ENCODE measurements at regions of chr7 and their contacts with region 1.

Region 1: GRCh38 chr7:30284298-30285066 is at the start of gene ZNRF2:
- DNase-seq: peak; percentile 99
- H3K4me3 Mint-ChIP-seq: peak within 1 kb of the TSS; percentile 79
- H3K27ac Mint-ChIP-seq: peak within 1 kb of the TSS; percentile 84
- H3K4me1 Mint-ChIP-seq: peaks cover 39% of the 10 kb centered on the region
- H3K27me3 Mint-ChIP-seq: no peaks in the 10 kb centered on the region
- total RNA-seq, gene ZNRF2: 10.4 to 10.5 TPM

Region 2: DNA sequence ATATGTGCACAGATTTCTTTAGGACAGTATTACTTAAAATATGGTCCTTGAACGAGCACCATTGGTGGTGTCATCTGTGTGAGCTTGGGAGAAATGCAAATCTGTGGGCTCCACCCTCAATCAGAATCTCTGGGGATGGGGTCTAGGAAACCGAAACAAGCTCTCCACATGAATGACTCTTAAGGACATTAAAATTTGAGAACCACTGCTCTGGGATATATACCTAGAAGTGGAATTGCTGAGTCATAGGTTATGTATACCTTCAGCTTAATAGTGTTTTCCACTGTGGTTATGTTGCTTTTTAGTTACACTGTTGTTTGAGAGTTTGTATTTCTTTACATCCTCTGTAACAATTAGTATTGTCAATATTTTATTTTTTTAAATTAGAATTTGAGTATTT is 23.9 kb after region 1 on chr7:
- CTCF ChIA-PET with region 1: no interaction called
- intact Hi-C with region 1: loop called (anchors 1 kb)
- DNase-seq: no peak
- H3K4me3 Mint-ChIP-seq: no peak overlapping the region
- H3K27ac Mint-ChIP-seq: no peak overlapping the region
- H3K4me1 Mint-ChIP-seq: peaks cover 54% of the 10 kb centered on the region
- H3K27me3 Mint-ChIP-seq: no peaks in the 10 kb centered on the region

Region 3: GRCh38 chr7:30330134-30331111 is 45.9 kb after region 1 on chr7:
- CTCF ChIA-PET with region 1: no interaction called
- intact Hi-C with region 1: loop called (anchors 1 kb)
- DNase-seq: peak; percentile 52
- H3K4me3 Mint-ChIP-seq: peak overlapping the region; percentile 54
- H3K27ac Mint-ChIP-seq: peak overlapping the region; percentile 48
- H3K4me1 Mint-ChIP-seq: peaks cover 44% of the 10 kb centered on the region
- H3K27me3 Mint-ChIP-seq: no peaks in the 10 kb centered on the region

Region 4: GRCh38 chr7:30504347-30505173 is 220.1 kb after region 1 on chr7 and contains the start of gene GGCT:
- CTCF ChIA-PET with region 1: no interaction called
- intact Hi-C with region 1: loop called (anchors 1 kb)
- DNase-seq: peak; percentile 99
- H3K4me3 Mint-ChIP-seq: peak within 1 kb of the TSS; percentile 82
- H3K27ac Mint-ChIP-seq: peak within 1 kb of the TSS; percentile 85
- H3K4me1 Mint-ChIP-seq: peaks cover 38% of the 10 kb centered on the region
- H3K27me3 Mint-ChIP-seq: no peaks in the 10 kb centered on the region
- total RNA-seq, gene GGCT: 83.0 to 83.8 TPM

Region 5: GRCh38 chr7:30727061-30727945 is 442.8 kb after region 1 on chr7:
- CTCF ChIA-PET with region 1: no interaction called
- intact Hi-C with region 1: loop called (anchors 1 kb)
- DNase-seq: peak; percentile 75
- H3K4me3 Mint-ChIP-seq: peak overlapping the region; percentile 77
- H3K27ac Mint-ChIP-seq: peak overlapping the region; percentile 89
- H3K4me1 Mint-ChIP-seq: peaks cover 54% of the 10 kb centered on the region
- H3K27me3 Mint-ChIP-seq: no peaks in the 10 kb centered on the region